Activated naive CD4-positive, alpha-beta T cell treated with anti-CD3 and anti-CD28 coated beads for 36 hours (primary cell): ENCODE measurements at regions of chr12 and their contacts with region 1.

Region 1: GRCh38 chr12:12474931-12475795 is 87.5 kb downstream of the DUSP16 start:
- DNase-seq: peak; percentile 71
- H3K4me3 Mint-ChIP-seq: peak overlapping the region; percentile 19
- H3K27ac Mint-ChIP-seq: peak overlapping the region; percentile 95
- H3K4me1 Mint-ChIP-seq: peaks cover 52% of the 10 kb centered on the region
- H3K27me3 Mint-ChIP-seq: no peaks in the 10 kb centered on the region

Region 2: DNA sequence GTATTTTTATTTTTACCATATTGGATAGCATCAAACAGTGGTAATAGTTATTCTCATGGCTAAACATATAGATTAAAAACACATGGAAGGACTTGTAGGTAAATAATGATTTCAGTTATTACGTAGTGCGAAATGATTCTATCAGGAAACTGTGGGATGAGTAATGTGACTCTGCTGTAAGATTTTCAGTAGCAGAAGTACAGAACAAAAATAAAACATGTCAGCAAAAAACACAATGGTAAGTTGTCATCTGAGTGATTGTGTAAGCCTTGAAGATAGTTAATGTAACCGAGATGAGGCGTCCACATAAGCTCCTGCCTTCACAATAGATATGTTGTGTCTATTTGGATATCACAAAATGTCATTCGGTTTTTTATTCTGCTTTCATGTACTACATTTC is 18.5 kb before region 1 on chr12:
- CTCF ChIA-PET with region 1: interaction called, 4 read pairs
- intact Hi-C with region 1: loop called (anchors 1 kb)
- DNase-seq: no peak
- H3K4me3 Mint-ChIP-seq: peak overlapping the region; percentile 17
- H3K27ac Mint-ChIP-seq: peak overlapping the region; percentile 76
- H3K4me1 Mint-ChIP-seq: peaks cover 51% of the 10 kb centered on the region
- H3K27me3 Mint-ChIP-seq: no peaks in the 10 kb centered on the region